ENCODE measurements at regions of chr20 and their contacts with region 1.

Region 1: DNA sequence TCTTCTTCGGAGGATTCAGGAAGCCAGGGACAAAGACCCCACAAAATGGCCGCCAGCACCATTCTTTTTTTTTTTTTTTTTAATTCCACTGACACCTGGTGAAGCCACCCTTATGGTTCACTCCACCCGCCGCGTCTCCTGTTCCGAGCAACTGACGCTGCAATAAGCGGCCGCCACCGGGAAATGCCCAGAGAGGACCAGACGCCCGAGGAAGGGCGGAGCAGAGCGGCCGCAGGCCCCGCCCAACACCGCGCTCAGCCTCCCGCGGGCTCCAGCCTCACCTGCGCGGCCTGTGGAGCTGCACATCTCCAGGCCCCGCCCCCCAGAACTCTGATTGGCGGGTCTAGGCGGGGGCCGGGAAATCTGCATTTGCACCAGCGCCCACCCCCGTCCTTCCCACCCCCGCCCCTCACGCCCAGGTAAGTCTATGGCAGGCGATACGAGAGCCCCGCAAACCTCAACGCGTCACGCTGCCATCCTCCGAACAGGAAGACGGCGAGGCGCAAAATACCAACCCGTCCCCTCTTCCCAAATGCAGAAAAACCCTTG is 1.1 kb downstream of the ATP9A start:
- DNase-seq: peak; percentile 40
- H3K4me3 ChIP-seq: peak overlapping the region; percentile 51 to 88 (median 86)
- H3K27ac ChIP-seq: no peak overlapping the region
- H3K4me1 ChIP-seq: no peaks in the 10 kb centered on the region
- H3K27me3 ChIP-seq: no peaks in the 10 kb centered on the region
- CTCF ChIP-seq: no peak
- POLR2A ChIP-seq: no peak

Region 2: GRCh38 chr20:51366155-51366886 is 400.8 kb before region 1 on chr20:
- CTCF ChIA-PET with region 1: no interaction called
- POLR2A ChIA-PET with region 1: no interaction called
- dilution Hi-C with region 1: no loop called
- intact Hi-C with region 1: loop called (anchors 10 kb)
- DNase-seq: peak; percentile 95
- H3K4me3 ChIP-seq: no peak overlapping the region
- H3K27ac ChIP-seq: peak overlapping the region; percentile 99
- H3K4me1 ChIP-seq: peaks cover 28% of the 10 kb centered on the region
- H3K27me3 ChIP-seq: no peaks in the 10 kb centered on the region
- CTCF ChIP-seq: no peak
- POLR2A ChIP-seq: no peak

Region 3: GRCh38 chr20:51639206-51639832 is 127.8 kb before region 1 on chr20:
- CTCF ChIA-PET with region 1: interaction called, 3 read pairs
- POLR2A ChIA-PET with region 1: no interaction called
- dilution Hi-C with region 1: no loop called
- intact Hi-C with region 1: loop called (anchors 2 kb)
- DNase-seq: peak; percentile 84
- H3K4me3 ChIP-seq: no peak overlapping the region
- H3K27ac ChIP-seq: no peak overlapping the region
- H3K4me1 ChIP-seq: peaks cover 3% of the 10 kb centered on the region
- H3K27me3 ChIP-seq: no peaks in the 10 kb centered on the region
- CTCF ChIP-seq: peak; percentile 83 to 88
- POLR2A ChIP-seq: no peak

Region 4: GRCh38 chr20:51650685-51651134 is 116.4 kb before region 1 on chr20:
- CTCF ChIA-PET with region 1: no interaction called
- POLR2A ChIA-PET with region 1: no interaction called
- dilution Hi-C with region 1: no loop called
- intact Hi-C with region 1: loop called (anchors 5 kb)
- DNase-seq: peak; percentile 85
- H3K4me3 ChIP-seq: no peak overlapping the region
- H3K27ac ChIP-seq: peak overlapping the region; percentile 21
- H3K4me1 ChIP-seq: peaks cover 24% of the 10 kb centered on the region
- H3K27me3 ChIP-seq: no peaks in the 10 kb centered on the region
- CTCF ChIP-seq: no peak
- POLR2A ChIP-seq: no peak

Region 5: DNA sequence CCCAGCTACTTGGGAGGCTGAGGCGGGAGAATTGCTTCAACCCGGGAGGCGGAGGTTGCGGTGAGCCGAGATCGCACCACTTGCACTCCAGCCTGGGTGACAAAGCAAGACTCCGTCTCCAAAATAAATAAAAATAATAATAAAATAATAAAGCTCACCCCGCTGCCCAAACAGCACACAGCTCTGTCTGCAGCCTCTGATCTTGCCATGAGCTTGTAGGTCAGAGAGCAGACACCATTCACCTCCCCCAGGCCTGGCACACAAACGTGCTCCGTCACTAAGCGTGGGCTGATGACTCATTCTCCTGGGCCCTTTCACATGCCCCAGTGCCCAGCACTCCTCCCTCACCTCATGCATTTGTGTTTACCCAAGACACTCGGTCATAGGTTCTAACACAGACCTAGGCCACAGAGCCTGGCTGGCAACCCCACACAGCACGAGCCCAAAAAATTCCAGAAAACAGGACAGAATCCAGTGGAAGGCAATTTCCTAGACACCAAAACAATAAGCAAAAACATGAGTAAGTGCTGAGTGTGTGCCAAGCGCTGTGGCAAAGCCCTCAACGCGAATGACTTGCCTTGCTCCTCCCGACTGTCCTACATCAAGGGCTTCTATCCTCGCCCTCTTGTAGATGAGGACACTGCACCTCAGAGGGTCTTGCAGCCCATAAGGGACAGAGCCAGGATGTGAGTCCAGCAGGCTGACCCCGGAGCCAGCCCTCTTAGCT is 16.9 kb before region 1 on chr20:
- CTCF ChIA-PET with region 1: interaction called, 4 read pairs
- POLR2A ChIA-PET with region 1: no interaction called
- dilution Hi-C with region 1: no loop called
- intact Hi-C with region 1: loop called (anchors 2 kb)
- DNase-seq: peak; percentile 94
- H3K4me3 ChIP-seq: no peak overlapping the region
- H3K27ac ChIP-seq: peak overlapping the region; percentile 52
- H3K4me1 ChIP-seq: peaks cover 37% of the 10 kb centered on the region
- H3K27me3 ChIP-seq: no peaks in the 10 kb centered on the region
- CTCF ChIP-seq: no peak
- POLR2A ChIP-seq: no peak

Measured in endothelial cell of umbilical vein (primary cell).